ENCODE measurements at regions of chr7 and their contacts with region 1.

Region 1: GRCh38 chr7:26365077-26365900 is 73.6 kb downstream of the SNX10 start:
- DNase-seq: peak; percentile 76
- ATAC-seq: peak; percentile 74
- H3K4me3 ChIP-seq: no peak overlapping the region
- H3K27ac ChIP-seq: no peak overlapping the region
- H3K4me1 ChIP-seq: peaks cover 9% of the 10 kb centered on the region
- H3K27me3 ChIP-seq: no peaks in the 10 kb centered on the region
- CTCF ChIP-seq: peak; percentile 86

Region 2: DNA sequence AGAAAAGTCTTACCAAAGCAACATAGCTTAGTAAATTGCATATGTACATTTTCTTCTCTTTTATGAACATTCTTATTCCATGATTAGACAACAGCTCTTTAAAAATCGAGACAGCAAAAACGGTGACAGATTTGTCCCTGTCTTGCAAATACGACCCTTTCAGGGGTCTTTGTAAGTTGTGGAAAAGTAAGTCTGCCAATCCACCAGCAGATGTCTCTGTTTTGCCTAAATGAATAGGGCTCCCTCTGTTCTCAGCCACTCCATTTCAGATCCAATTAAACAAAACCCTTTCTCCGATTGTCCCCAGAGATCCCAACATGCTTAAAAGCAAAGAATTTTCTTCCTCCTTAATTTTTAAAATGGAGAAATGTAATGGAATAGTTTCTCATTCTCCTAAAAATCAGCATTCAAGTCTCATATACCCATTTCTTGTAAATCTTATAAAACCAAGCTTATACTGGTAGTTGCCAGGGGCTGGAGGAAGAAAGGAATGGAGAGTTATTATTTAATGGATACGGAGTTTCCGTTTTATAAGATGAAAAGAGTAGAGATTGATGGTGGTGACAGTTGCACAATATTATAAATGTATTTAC is 274.3 kb before region 1 on chr7:
- CTCF ChIA-PET with region 1: no interaction called
- POLR2A ChIA-PET with region 1: no interaction called
- intact Hi-C with region 1: loop called (anchors 2 kb)
- DNase-seq: peak; percentile 60
- ATAC-seq: peak; percentile 89
- H3K4me3 ChIP-seq: peak overlapping the region; percentile 26; the same call in 1 of the 2 replicates
- H3K27ac ChIP-seq: no peak overlapping the region
- H3K4me1 ChIP-seq: peaks cover 8% of the 10 kb centered on the region
- H3K27me3 ChIP-seq: no peaks in the 10 kb centered on the region
- CTCF ChIP-seq: peak; percentile 88

Region 3: GRCh38 chr7:26291699-26292538 is 73.4 kb before region 1 on chr7 and contains the start of gene SNX10:
- CTCF ChIA-PET with region 1: interaction called, 8 read pairs
- POLR2A ChIA-PET with region 1: no interaction called
- intact Hi-C with region 1: loop called (anchors 2 kb)
- DNase-seq: peak; percentile 72
- ATAC-seq: peak; percentile 89
- H3K4me3 ChIP-seq: peak within 1 kb of the TSS; percentile 97
- H3K27ac ChIP-seq: no peak within 1 kb of the TSS
- H3K4me1 ChIP-seq: peaks cover 6% of the 10 kb centered on the region; the same call in 1 of the 2 replicates
- H3K27me3 ChIP-seq: no peaks in the 10 kb centered on the region
- CTCF ChIP-seq: peak; percentile 54
- total RNA-seq, gene SNX10: 6.2 and 7.9 TPM in 2 replicates

Region 4: DNA sequence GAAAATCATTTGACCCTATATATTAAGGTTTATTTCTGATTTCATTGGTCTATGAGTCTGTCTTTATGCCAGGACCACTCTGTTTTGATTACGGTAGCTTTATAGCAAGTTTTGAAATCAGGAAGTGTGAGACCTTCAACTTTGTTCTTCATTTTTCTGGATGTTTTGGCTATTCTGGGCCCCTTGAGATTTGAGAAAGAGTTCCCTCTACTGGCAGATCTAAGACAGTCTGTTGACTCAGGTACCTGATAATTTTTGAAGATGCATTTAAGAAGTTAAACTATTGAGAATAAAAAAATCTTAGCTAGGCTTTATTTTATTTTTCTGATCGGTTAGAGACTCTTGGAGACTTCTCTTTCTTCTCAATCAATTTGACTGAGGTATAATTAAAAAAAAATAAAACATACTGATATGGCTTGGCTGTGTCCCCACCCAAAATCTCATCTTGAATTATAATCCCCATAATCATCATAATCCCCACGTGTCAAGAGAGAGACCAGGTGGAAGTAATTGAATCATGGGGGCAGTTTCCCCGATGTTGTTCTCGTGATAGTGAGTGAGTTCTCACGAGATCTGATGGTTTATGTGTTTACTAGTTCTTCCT is 135.6 kb after region 1 on chr7:
- CTCF ChIA-PET with region 1: interaction called, 26 read pairs
- POLR2A ChIA-PET with region 1: no interaction called
- intact Hi-C with region 1: loop called (anchors 1 kb)
- DNase-seq: peak; percentile 58
- ATAC-seq: peak; percentile 71
- H3K4me3 ChIP-seq: no peak overlapping the region
- H3K27ac ChIP-seq: no peak overlapping the region
- H3K4me1 ChIP-seq: no peaks in the 10 kb centered on the region
- H3K27me3 ChIP-seq: no peaks in the 10 kb centered on the region
- CTCF ChIP-seq: peak; percentile 79

Region 5: GRCh38 chr7:26538689-26539088 is 173.4 kb after region 1 on chr7:
- CTCF ChIA-PET with region 1: no interaction called
- POLR2A ChIA-PET with region 1: no interaction called
- intact Hi-C with region 1: no loop called
- DNase-seq: no peak
- ATAC-seq: no peak
- H3K4me3 ChIP-seq: no peak overlapping the region
- H3K27ac ChIP-seq: no peak overlapping the region
- H3K4me1 ChIP-seq: no peaks in the 10 kb centered on the region
- H3K27me3 ChIP-seq: no peaks in the 10 kb centered on the region
- CTCF ChIP-seq: no peak

Region 6: GRCh38 chr7:26585081-26585641 is 219.9 kb after region 1 on chr7:
- CTCF ChIA-PET with region 1: interaction called, 3 read pairs
- POLR2A ChIA-PET with region 1: no interaction called
- intact Hi-C with region 1: loop called (anchors 1 kb)
- DNase-seq: peak; percentile 42
- ATAC-seq: peak; percentile 71
- H3K4me3 ChIP-seq: no peak overlapping the region
- H3K27ac ChIP-seq: no peak overlapping the region
- H3K4me1 ChIP-seq: 0 out of 2 replicates have a peak, but pooled peaks cover 3% of the 10 kb centered on the region
- H3K27me3 ChIP-seq: no peaks in the 10 kb centered on the region
- CTCF ChIP-seq: peak; percentile 40; the same call in 1 of the 2 replicates

Region 7: GRCh38 chr7:26694141-26694540 is 328.9 kb after region 1 on chr7:
- CTCF ChIA-PET with region 1: no interaction called
- POLR2A ChIA-PET with region 1: no interaction called
- intact Hi-C with region 1: no loop called
- DNase-seq: no peak
- ATAC-seq: no peak
- H3K4me3 ChIP-seq: no peak overlapping the region
- H3K27ac ChIP-seq: no peak overlapping the region
- H3K4me1 ChIP-seq: peaks cover 15% of the 10 kb centered on the region
- H3K27me3 ChIP-seq: no peaks in the 10 kb centered on the region
- CTCF ChIP-seq: no peak

Region 8: GRCh38 chr7:26864309-26865093 is 499.2 kb after region 1 on chr7 and contains the start of gene SKAP2:
- CTCF ChIA-PET with region 1: no interaction called
- POLR2A ChIA-PET with region 1: no interaction called
- intact Hi-C with region 1: loop called (anchors 5 kb)
- DNase-seq: peak; percentile 99
- ATAC-seq: peak; percentile 85
- H3K4me3 ChIP-seq: peak within 1 kb of the TSS; percentile 92
- H3K27ac ChIP-seq: peak within 1 kb of the TSS; percentile 81
- H3K4me1 ChIP-seq: peaks cover 42% of the 10 kb centered on the region
- H3K27me3 ChIP-seq: no peaks in the 10 kb centered on the region
- CTCF ChIP-seq: no peak
- total RNA-seq, gene SKAP2: 9.6 and 18.4 TPM in 2 replicates

Measured in PC-3 (cell line).